ENCODE measurements at regions of chr2 and their contacts with region 1.

Region 1: DNA sequence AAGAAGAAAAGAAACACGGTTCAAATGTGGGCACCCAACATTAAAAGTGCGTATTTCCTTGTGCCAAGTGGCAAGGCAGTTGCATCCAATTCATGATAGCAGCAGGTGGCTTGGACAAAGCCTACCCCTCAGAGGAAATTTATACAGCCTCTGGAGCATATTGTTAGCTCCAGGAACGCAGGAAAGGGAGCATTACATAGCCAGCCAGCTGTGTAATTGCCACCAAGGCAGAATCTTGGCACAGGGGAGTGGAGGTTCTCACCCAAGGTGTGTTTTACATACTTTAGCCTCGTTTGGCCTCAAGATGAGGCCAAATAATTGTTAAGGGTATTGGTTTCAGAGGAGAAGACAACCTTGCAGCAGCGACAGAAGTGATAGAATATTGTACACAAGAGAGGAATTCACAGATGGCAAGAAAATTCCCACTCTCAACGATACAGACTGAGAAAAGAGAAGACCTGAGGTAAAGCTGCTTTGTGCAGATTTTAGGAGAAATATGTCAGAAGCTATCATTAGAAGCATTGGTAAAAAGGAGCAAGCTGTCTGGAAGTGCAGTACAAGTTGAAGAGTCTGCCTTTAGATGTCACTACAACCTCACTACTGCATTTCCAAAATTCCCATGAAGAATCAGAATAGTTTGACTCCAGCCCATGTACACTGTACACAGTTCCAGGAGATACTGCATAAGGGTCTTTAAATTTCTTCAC is 527.0 kb downstream of the TMEM182 start:
- DNase-seq: no peak
- H3K4me3 ChIP-seq: no peak overlapping the region
- H3K4me3 Mint-ChIP-seq: no peak overlapping the region
- H3K27ac Mint-ChIP-seq: no peak overlapping the region
- H3K4me1 ChIP-seq: no peaks in the 10 kb centered on the region
- H3K4me1 Mint-ChIP-seq: no peaks in the 10 kb centered on the region
- H3K27me3 ChIP-seq: no peaks in the 10 kb centered on the region; the same call in 1 of the 2 replicates
- H3K27me3 Mint-ChIP-seq: peaks cover 24% of the 10 kb centered on the region
- CTCF ChIP-seq: peak; percentile 16 to 23

Region 2: GRCh38 chr2:102753563-102754159 is 535.2 kb before region 1 on chr2:
- CTCF ChIA-PET with region 1: no interaction called
- POLR2A ChIA-PET with region 1: no interaction called
- intact Hi-C with region 1: no loop called
- DNase-seq: peak in 1 of 2 experiments; percentile 31
- H3K4me3 ChIP-seq: no peak overlapping the region
- H3K4me3 Mint-ChIP-seq: no peak overlapping the region
- H3K27ac Mint-ChIP-seq: no peak overlapping the region
- H3K4me1 ChIP-seq: no peaks in the 10 kb centered on the region
- H3K4me1 Mint-ChIP-seq: no peaks in the 10 kb centered on the region
- H3K27me3 ChIP-seq: no peaks in the 10 kb centered on the region
- H3K27me3 Mint-ChIP-seq: no peaks in the 10 kb centered on the region
- CTCF ChIP-seq: peak; percentile 73 to 76

Region 3: DNA sequence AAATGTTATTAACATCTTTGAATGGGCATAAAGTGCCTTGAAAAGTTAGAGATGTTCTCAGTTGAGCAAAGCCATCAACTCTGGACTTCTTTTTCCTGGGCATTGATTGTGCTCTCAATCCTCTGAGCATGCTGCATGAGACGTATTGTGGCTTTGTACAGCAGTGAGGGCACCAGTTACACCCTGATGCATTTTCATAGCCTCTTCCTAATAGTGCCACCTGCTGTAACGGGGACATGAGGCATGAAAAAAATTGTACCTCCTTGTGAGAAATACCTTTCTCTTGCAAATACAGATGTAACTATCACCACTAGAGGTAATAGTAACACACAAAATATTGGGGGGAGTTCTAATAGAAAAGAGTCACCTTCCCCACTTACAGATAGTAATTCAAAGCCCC is 170.4 kb after region 1 on chr2:
- CTCF ChIA-PET with region 1: no interaction called
- POLR2A ChIA-PET with region 1: no interaction called
- intact Hi-C with region 1: loop called (anchors 5 kb)
- DNase-seq: no peak
- H3K4me3 ChIP-seq: no peak overlapping the region
- H3K4me3 Mint-ChIP-seq: no peak overlapping the region
- H3K27ac Mint-ChIP-seq: no peak overlapping the region
- H3K4me1 ChIP-seq: no peaks in the 10 kb centered on the region
- H3K4me1 Mint-ChIP-seq: no peaks in the 10 kb centered on the region
- H3K27me3 ChIP-seq: no peaks in the 10 kb centered on the region
- H3K27me3 Mint-ChIP-seq: peaks cover 3% of the 10 kb centered on the region
- CTCF ChIP-seq: peak in 1 of 2 experiments; percentile 28

Region 4: GRCh38 chr2:103506812-103507211 is 218.0 kb after region 1 on chr2:
- CTCF ChIA-PET with region 1: no interaction called
- POLR2A ChIA-PET with region 1: no interaction called
- intact Hi-C with region 1: no loop called
- DNase-seq: no peak
- H3K4me3 ChIP-seq: no peak overlapping the region
- H3K4me3 Mint-ChIP-seq: no peak overlapping the region
- H3K27ac Mint-ChIP-seq: no peak overlapping the region
- H3K4me1 ChIP-seq: no peaks in the 10 kb centered on the region
- H3K4me1 Mint-ChIP-seq: no peaks in the 10 kb centered on the region
- H3K27me3 ChIP-seq: no peaks in the 10 kb centered on the region
- H3K27me3 Mint-ChIP-seq: no peaks in the 10 kb centered on the region
- CTCF ChIP-seq: no peak

Measured in Caco-2 (cell line).